ENCODE measurements at regions of chr9 and their contacts with region 1.

Region 1: GRCh38 chr9:74379718-74380117 is 117.4 kb upstream of the RORB start:
- DNase-seq: peak in 1 of 2 donors; percentile 59
- ATAC-seq: peak; percentile 50 to 73 (median 59)
- H3K4me3 ChIP-seq: no peak overlapping the region
- H3K4me3 Mint-ChIP-seq: no peak overlapping the region
- H3K27ac ChIP-seq: no peak overlapping the region
- H3K27ac Mint-ChIP-seq: peak overlapping the region in 1 of 2 donors; percentile 49
- H3K4me1 ChIP-seq: no peaks in the 10 kb centered on the region
- H3K4me1 Mint-ChIP-seq: peaks cover 7 to 10% of the 10 kb centered on the region in 2 donors
- H3K27me3 ChIP-seq: no peaks in the 10 kb centered on the region
- H3K27me3 Mint-ChIP-seq: no peaks in the 10 kb centered on the region
- CTCF ChIP-seq: peak; percentile 49

Region 2: GRCh38 chr9:73200694-73201452 is 1178.8 kb before region 1 on chr9:
- intact Hi-C with region 1: loop called (anchors 5 kb)
- DNase-seq: peak in 1 of 2 donors; percentile 48
- ATAC-seq: no peak
- H3K4me3 ChIP-seq: no peak overlapping the region
- H3K4me3 Mint-ChIP-seq: no peak overlapping the region
- H3K27ac ChIP-seq: no peak overlapping the region
- H3K27ac Mint-ChIP-seq: no peak overlapping the region
- H3K4me1 ChIP-seq: no peaks in the 10 kb centered on the region
- H3K4me1 Mint-ChIP-seq: no peaks in the 10 kb centered on the region
- H3K27me3 ChIP-seq: no peaks in the 10 kb centered on the region
- H3K27me3 Mint-ChIP-seq: peaks cover 12 to 22% of the 10 kb centered on the region in 2 donors
- CTCF ChIP-seq: peak; percentile 67

Region 3: GRCh38 chr9:73683862-73684591 is 695.7 kb before region 1 on chr9:
- intact Hi-C with region 1: loop called (anchors 2 kb)
- DNase-seq: peak in 1 of 2 donors; percentile 16
- ATAC-seq: no peak
- H3K4me3 ChIP-seq: no peak overlapping the region
- H3K4me3 Mint-ChIP-seq: no peak overlapping the region
- H3K27ac ChIP-seq: no peak overlapping the region
- H3K27ac Mint-ChIP-seq: no peak overlapping the region
- H3K4me1 ChIP-seq: no peaks in the 10 kb centered on the region
- H3K4me1 Mint-ChIP-seq: no peaks in the 10 kb centered on the region
- H3K27me3 ChIP-seq: no peaks in the 10 kb centered on the region
- H3K27me3 Mint-ChIP-seq: no peaks in the 10 kb centered on the region
- CTCF ChIP-seq: peak; percentile 56

Region 4: GRCh38 chr9:74107692-74108091 is 272.0 kb before region 1 on chr9:
- intact Hi-C with region 1: no loop called
- DNase-seq: no peak
- ATAC-seq: no peak
- H3K4me3 ChIP-seq: no peak overlapping the region
- H3K4me3 Mint-ChIP-seq: no peak overlapping the region
- H3K27ac ChIP-seq: no peak overlapping the region
- H3K27ac Mint-ChIP-seq: no peak overlapping the region
- H3K4me1 ChIP-seq: no peaks in the 10 kb centered on the region
- H3K4me1 Mint-ChIP-seq: no peaks in the 10 kb centered on the region
- H3K27me3 ChIP-seq: no peaks in the 10 kb centered on the region
- H3K27me3 Mint-ChIP-seq: no peaks in the 10 kb centered on the region
- CTCF ChIP-seq: no peak

Region 5: GRCh38 chr9:74358959-74359358 is 20.8 kb before region 1 on chr9:
- intact Hi-C with region 1: no loop called
- DNase-seq: no peak
- ATAC-seq: no peak
- H3K4me3 ChIP-seq: no peak overlapping the region
- H3K4me3 Mint-ChIP-seq: no peak overlapping the region
- H3K27ac ChIP-seq: no peak overlapping the region
- H3K27ac Mint-ChIP-seq: no peak overlapping the region
- H3K4me1 ChIP-seq: no peaks in the 10 kb centered on the region
- H3K4me1 Mint-ChIP-seq: no peaks in the 10 kb centered on the region
- H3K27me3 ChIP-seq: no peaks in the 10 kb centered on the region
- H3K27me3 Mint-ChIP-seq: no peaks in the 10 kb centered on the region
- CTCF ChIP-seq: no peak

Region 6: DNA sequence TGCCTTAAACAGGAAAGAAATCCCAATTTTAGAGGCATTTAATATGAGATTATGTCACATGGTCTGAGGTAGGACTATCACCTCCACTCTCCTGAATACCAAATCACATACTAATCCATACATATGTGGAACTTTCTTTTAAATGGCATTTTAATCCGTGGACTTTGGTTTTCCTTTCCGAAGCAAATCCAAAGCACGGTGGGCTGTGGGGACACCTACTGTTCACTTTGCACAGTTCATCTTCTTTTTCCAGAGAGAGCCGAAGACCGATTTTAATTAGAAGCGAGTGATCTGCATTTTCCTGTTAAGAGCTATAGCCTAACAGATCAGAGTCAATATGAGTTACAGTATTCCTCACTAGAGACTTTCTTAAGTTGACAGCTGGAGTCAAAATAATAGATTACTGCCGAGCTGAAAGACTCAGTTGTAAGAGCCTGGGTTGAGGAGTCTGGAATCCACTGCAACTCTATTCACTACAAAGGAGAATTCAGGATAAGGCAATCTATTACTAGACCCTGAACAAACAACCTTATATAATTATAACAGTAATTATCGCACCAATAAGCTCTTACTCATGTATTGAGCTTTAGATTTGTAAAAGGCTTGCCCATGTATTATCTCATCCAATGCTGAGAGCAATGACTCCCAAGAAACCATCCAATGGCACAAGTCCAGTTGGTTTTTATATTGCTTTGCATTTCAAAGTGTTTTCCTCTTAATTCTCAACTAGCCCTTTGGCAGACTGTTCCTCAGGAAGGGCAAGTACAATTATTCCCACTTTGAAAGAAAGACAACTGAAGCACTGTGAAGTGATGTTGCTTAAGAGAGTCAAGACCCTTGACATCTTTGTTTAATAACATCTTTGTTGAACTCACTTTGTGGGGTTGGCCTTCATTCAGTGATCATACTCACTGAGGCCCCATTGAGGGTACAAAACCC is 363.3 kb after region 1 on chr9:
- intact Hi-C with region 1: loop called (anchors 10 kb)
- DNase-seq: peak in 1 of 2 donors; percentile 30
- ATAC-seq: no peak
- H3K4me3 ChIP-seq: no peak overlapping the region
- H3K4me3 Mint-ChIP-seq: no peak overlapping the region
- H3K27ac ChIP-seq: no peak overlapping the region
- H3K27ac Mint-ChIP-seq: no peak overlapping the region
- H3K4me1 ChIP-seq: no peaks in the 10 kb centered on the region
- H3K4me1 Mint-ChIP-seq: no peaks in the 10 kb centered on the region
- H3K27me3 ChIP-seq: no peaks in the 10 kb centered on the region
- H3K27me3 Mint-ChIP-seq: peaks cover 14 to 31% of the 10 kb centered on the region in 2 donors
- CTCF ChIP-seq: peak; percentile 48

Region 7: DNA sequence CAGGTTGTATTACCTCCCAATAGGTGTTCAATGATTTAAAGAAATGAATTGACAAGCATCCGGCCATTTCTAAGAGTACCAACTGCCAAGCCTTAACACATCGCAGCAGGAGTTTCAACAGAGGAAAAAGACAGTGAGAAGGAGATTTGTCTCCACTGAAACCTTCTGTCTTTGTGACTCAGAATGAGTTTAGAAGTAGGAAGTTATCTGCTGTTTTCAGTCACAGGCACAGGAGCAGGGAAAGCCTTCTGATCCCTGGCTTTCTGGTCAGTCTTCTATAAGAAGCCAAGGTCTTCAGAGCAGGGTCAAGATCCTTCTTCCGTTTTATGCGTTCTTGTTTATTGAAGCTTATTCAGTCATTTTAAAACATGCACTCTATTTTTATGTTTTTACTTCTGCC is 1120.1 kb after region 1 on chr9:
- intact Hi-C with region 1: no loop called
- DNase-seq: no peak
- ATAC-seq: no peak
- H3K4me3 ChIP-seq: no peak overlapping the region
- H3K4me3 Mint-ChIP-seq: no peak overlapping the region
- H3K27ac ChIP-seq: no peak overlapping the region
- H3K27ac Mint-ChIP-seq: no peak overlapping the region
- H3K4me1 ChIP-seq: no peaks in the 10 kb centered on the region
- H3K4me1 Mint-ChIP-seq: no peaks in the 10 kb centered on the region
- H3K27me3 ChIP-seq: no peaks in the 10 kb centered on the region
- H3K27me3 Mint-ChIP-seq: no peaks in the 10 kb centered on the region
- CTCF ChIP-seq: no peak

Measured in natural killer cell (primary cell).